Mammary epithelial cell (primary cell): ENCODE measurements at regions of chr10 and their contacts with region 1.

Region 1: DNA sequence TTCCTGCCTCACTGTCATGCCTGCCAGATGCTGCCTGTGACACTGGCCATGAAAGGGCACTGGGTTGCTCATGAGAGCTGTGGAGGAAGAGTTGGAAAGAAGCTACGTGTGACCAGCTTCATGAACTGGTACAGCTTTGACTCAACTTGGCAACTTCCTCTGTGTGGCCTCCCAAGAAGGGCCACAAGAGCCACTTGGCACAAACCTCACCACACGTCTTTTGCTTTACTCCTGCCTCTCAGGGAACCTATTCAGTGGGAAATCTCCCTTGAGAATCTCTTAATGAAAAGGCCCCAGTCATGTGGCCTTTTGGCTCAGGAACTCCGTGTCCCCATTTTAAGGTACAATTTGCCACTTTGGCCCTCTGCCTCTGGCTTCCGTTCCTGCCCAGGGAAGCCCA is 54.5 kb downstream of the FRMD4A start:
- DNase-seq: no peak
- H3K4me3 ChIP-seq: no peak overlapping the region
- H3K27ac ChIP-seq: no peak overlapping the region
- H3K4me1 ChIP-seq: no peaks in the 10 kb centered on the region
- H3K27me3 ChIP-seq: peaks cover 3% of the 10 kb centered on the region
- CTCF ChIP-seq: no peak

Region 2: DNA sequence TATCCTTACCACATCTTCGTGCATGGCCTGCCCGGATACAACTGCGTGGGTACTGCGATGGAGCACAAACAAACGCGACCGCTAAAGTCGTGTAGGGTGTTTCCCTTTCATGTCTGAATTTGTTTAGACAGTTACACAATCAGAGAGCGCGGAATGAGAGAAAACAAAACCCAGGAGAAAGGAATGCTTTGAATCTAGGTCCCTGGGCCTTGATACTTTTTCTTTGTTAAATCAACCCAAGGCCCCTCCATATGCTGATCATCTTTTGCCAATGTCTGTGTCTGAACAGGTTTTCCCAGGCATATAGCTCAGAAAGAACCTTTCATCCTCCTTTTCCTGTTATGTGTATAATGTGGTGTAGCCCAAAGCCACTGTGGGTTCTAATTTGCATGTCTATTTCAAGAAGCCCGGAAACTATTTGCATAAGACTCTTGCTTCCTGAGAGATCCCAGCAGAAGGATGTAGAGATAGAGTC is 91.3 kb before region 1 on chr10:
- CTCF ChIA-PET with region 1: interaction called, 11 read pairs
- dilution Hi-C with region 1: no loop called
- in situ Hi-C with region 1: no loop called
- intact Hi-C with region 1: no loop called
- DNase-seq: peak; percentile 87
- H3K4me3 ChIP-seq: no peak overlapping the region
- H3K27ac ChIP-seq: peak overlapping the region; percentile 36
- H3K4me1 ChIP-seq: peaks cover 3% of the 10 kb centered on the region
- H3K27me3 ChIP-seq: peaks cover 7% of the 10 kb centered on the region
- CTCF ChIP-seq: no peak

Region 3: DNA sequence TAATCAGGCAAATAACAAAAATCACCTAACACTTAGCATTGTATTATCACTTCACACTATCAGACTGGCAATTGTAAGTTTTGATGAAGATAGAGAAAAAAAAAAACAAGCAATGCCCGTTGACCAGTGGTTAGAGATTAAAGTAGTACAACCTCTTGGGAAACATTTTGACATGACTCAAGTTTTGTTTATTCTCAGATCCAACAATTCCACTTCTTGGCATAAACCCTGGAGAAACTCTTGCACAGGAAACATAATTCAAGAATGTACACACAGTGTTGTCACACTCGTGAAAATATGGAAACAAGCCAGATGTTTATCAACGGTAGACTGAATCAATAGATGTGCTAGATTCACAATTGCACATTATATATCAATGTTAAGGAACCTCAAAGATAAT is 17.3 kb after region 1 on chr10:
- CTCF ChIA-PET with region 1: no interaction called
- dilution Hi-C with region 1: no loop called
- in situ Hi-C with region 1: no loop called
- intact Hi-C with region 1: no loop called
- DNase-seq: no peak
- H3K4me3 ChIP-seq: no peak overlapping the region
- H3K27ac ChIP-seq: no peak overlapping the region
- H3K4me1 ChIP-seq: no peaks in the 10 kb centered on the region
- H3K27me3 ChIP-seq: no peaks in the 10 kb centered on the region
- CTCF ChIP-seq: no peak